HepG2 (cell line): ENCODE measurements at regions of chr2 and their contacts with region 1.

Region 1: GRCh38 chr2:17309741-17310339 is 208.4 kb downstream of the RAD51AP2 start:
- DNase-seq: peak; percentile 86
- ATAC-seq: peak; percentile 99
- H3K4me3 ChIP-seq: no peak overlapping the region
- H3K27ac ChIP-seq: no peak overlapping the region
- H3K4me1 ChIP-seq: peaks cover 20% of the 10 kb centered on the region
- H3K27me3 ChIP-seq: no peaks in the 10 kb centered on the region; a peak in 1 of 5 replicates
- CTCF ChIP-seq: peak; percentile 91
- EP300 ChIP-seq: no peak
- POLR2A ChIP-seq: no peak
- RAD21 ChIP-seq: peak; percentile 82

Region 2: DNA sequence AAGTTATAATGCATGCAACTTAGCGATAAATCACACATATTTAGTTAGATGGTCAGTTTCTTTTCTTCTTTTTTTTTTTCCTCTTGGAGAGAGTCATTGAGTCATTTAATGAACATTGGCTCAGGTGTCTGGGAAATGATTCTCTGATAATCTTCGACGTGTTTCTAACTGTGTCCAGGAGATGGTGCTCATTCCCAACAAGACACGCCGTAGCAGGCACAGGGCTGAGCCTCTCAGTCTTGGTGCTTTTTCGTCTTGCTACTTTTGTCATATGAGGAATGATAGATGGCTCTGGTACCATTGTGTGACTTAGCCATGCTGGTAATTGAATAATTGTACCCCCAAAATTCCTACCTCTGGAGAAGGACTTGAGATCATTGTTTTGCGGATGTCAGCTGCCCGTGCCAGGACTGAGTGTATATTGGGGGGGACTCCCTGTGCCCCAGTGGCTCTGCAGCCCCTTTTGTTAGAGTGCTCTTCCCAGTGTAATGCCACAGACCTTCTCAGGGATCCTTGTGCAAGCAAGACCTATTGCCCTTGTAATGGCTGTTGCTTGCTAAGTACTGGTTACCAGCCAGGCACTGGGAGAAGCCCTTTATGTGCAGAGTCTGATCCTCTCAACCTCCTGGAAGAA is 536.6 kb before region 1 on chr2:
- CTCF ChIA-PET with region 1: interaction called, 18 read pairs
- POLR2A ChIA-PET with region 1: no interaction called
- in situ Hi-C with region 1: loop called (anchors 5 kb)
- intact Hi-C with region 1: loop called (anchors 1 kb)
- DNase-seq: peak; percentile 43
- ATAC-seq: peak; percentile 81
- H3K4me3 ChIP-seq: no peak overlapping the region
- H3K27ac ChIP-seq: no peak overlapping the region
- H3K4me1 ChIP-seq: peaks cover 7% of the 10 kb centered on the region; the same call in 1 of the 2 replicates
- H3K27me3 ChIP-seq: no peaks in the 10 kb centered on the region
- CTCF ChIP-seq: peak; percentile 89
- EP300 ChIP-seq: no peak
- POLR2A ChIP-seq: no peak
- RAD21 ChIP-seq: peak; percentile 73

Region 3: GRCh38 chr2:16900405-16901025 is 409.3 kb before region 1 on chr2:
- CTCF ChIA-PET with region 1: no interaction called
- POLR2A ChIA-PET with region 1: no interaction called
- in situ Hi-C with region 1: no loop called
- intact Hi-C with region 1: loop called (anchors 5 kb)
- DNase-seq: peak; percentile 55
- ATAC-seq: peak; percentile 98
- H3K4me3 ChIP-seq: no peak overlapping the region
- H3K27ac ChIP-seq: no peak overlapping the region
- H3K4me1 ChIP-seq: no peaks in the 10 kb centered on the region
- H3K27me3 ChIP-seq: no peaks in the 10 kb centered on the region
- CTCF ChIP-seq: peak; percentile 82
- EP300 ChIP-seq: no peak
- POLR2A ChIP-seq: no peak
- RAD21 ChIP-seq: peak; percentile 73

Region 4: DNA sequence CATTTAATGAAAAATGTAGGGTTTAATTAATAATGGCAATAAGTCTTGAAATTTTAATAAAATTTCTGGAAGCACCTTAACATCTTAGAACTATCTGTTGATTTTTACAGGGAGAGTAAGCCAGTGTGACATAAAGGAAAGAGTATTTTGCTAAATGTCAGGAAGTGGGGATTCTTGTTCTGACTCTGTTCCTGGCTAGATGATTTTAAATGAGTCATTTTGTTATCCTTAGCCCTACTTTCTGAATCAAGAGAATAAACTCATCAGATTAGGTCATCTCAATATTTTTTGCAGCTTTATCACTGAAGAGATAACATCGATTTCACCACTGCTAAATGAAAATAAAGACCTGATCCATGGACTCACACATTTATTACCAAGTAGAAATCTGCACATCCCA is 266.7 kb before region 1 on chr2:
- CTCF ChIA-PET with region 1: no interaction called
- POLR2A ChIA-PET with region 1: no interaction called
- in situ Hi-C with region 1: no loop called
- intact Hi-C with region 1: no loop called
- DNase-seq: no peak
- ATAC-seq: no peak
- H3K4me3 ChIP-seq: no peak overlapping the region
- H3K27ac ChIP-seq: no peak overlapping the region
- H3K4me1 ChIP-seq: no peaks in the 10 kb centered on the region
- H3K27me3 ChIP-seq: no peaks in the 10 kb centered on the region
- CTCF ChIP-seq: no peak
- EP300 ChIP-seq: no peak
- POLR2A ChIP-seq: no peak
- RAD21 ChIP-seq: no peak

Region 5: GRCh38 chr2:17171446-17172049 is 138.3 kb before region 1 on chr2:
- CTCF ChIA-PET with region 1: no interaction called
- POLR2A ChIA-PET with region 1: no interaction called
- in situ Hi-C with region 1: no loop called
- intact Hi-C with region 1: loop called (anchors 5 kb)
- DNase-seq: peak; percentile 45
- ATAC-seq: peak; percentile 100
- H3K4me3 ChIP-seq: no peak overlapping the region
- H3K27ac ChIP-seq: no peak overlapping the region
- H3K4me1 ChIP-seq: no peaks in the 10 kb centered on the region
- H3K27me3 ChIP-seq: no peaks in the 10 kb centered on the region
- CTCF ChIP-seq: peak; percentile 64
- EP300 ChIP-seq: peak in 1 of 2 experiments; percentile 12; a peak in 1 of 4 replicates
- POLR2A ChIP-seq: no peak
- RAD21 ChIP-seq: no peak

Region 6: GRCh38 chr2:17270894-17271293 is 38.9 kb before region 1 on chr2:
- CTCF ChIA-PET with region 1: no interaction called
- POLR2A ChIA-PET with region 1: no interaction called
- in situ Hi-C with region 1: no loop called
- intact Hi-C with region 1: no loop called
- DNase-seq: no peak
- ATAC-seq: no peak
- H3K4me3 ChIP-seq: no peak overlapping the region
- H3K27ac ChIP-seq: no peak overlapping the region
- H3K4me1 ChIP-seq: no peaks in the 10 kb centered on the region
- H3K27me3 ChIP-seq: no peaks in the 10 kb centered on the region
- CTCF ChIP-seq: no peak
- EP300 ChIP-seq: no peak
- POLR2A ChIP-seq: no peak
- RAD21 ChIP-seq: no peak

Region 7: GRCh38 chr2:17573085-17573803 is 263.4 kb after region 1 on chr2:
- CTCF ChIA-PET with region 1: no interaction called
- POLR2A ChIA-PET with region 1: no interaction called
- in situ Hi-C with region 1: no loop called
- intact Hi-C with region 1: loop called (anchors 5 kb)
- DNase-seq: peak; percentile 52
- ATAC-seq: peak; percentile 87
- H3K4me3 ChIP-seq: no peak overlapping the region
- H3K27ac ChIP-seq: no peak overlapping the region
- H3K4me1 ChIP-seq: peaks cover 40% of the 10 kb centered on the region
- H3K27me3 ChIP-seq: no peaks in the 10 kb centered on the region
- CTCF ChIP-seq: peak; percentile 68
- EP300 ChIP-seq: no peak
- POLR2A ChIP-seq: no peak
- RAD21 ChIP-seq: peak; percentile 66; the same call in 1 of the 2 replicates

Region 8: GRCh38 chr2:17658251-17658843 is 348.5 kb after region 1 on chr2:
- CTCF ChIA-PET with region 1: no interaction called
- POLR2A ChIA-PET with region 1: no interaction called
- in situ Hi-C with region 1: loop called (anchors 25 kb)
- intact Hi-C with region 1: no loop called
- DNase-seq: no peak
- ATAC-seq: peak; percentile 11; the same call in 1 of the 3 replicates
- H3K4me3 ChIP-seq: no peak overlapping the region
- H3K27ac ChIP-seq: no peak overlapping the region
- H3K4me1 ChIP-seq: no peaks in the 10 kb centered on the region
- H3K27me3 ChIP-seq: no peaks in the 10 kb centered on the region
- CTCF ChIP-seq: no peak
- EP300 ChIP-seq: no peak
- POLR2A ChIP-seq: no peak
- RAD21 ChIP-seq: no peak

Region 9: DNA sequence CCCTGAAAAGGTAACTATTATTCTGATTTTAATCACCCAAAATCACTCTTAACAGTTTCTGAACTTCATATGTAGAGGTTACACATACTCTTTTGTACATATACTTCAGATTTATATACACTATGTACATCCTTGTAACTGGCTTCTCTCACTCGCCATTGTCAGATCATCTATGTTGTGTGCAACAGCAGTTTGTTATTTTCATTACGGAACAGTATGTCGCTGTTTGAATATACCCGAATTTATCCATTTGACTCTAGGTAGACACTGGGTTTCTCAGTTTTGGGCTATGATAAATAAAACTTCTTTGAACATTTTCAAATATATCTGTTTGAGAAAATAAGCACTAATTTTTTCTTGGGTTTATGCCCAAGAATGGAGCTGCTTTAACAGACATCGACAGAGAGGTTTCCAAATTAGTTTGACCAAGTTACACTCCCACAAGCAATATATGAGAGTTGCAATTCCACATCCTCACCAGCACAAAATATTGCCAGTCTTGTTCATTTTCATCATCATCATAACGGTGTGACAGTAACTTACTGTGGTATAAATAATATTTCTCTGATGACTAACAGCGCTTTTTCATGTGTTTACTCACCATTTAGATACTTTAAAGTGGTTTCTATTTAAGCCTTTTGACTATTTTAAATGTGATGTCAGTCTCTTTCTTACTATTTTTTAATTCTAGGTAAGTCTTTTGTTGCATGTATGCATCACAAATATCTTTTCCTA is 362.9 kb after region 1 on chr2:
- CTCF ChIA-PET with region 1: no interaction called
- POLR2A ChIA-PET with region 1: no interaction called
- in situ Hi-C with region 1: loop called (anchors 25 kb)
- intact Hi-C with region 1: loop called (anchors 5 kb)
- DNase-seq: no peak
- ATAC-seq: no peak; the same call in 2 of the 3 replicates
- H3K4me3 ChIP-seq: no peak overlapping the region
- H3K27ac ChIP-seq: no peak overlapping the region
- H3K4me1 ChIP-seq: no peaks in the 10 kb centered on the region
- H3K27me3 ChIP-seq: no peaks in the 10 kb centered on the region
- CTCF ChIP-seq: no peak
- EP300 ChIP-seq: no peak
- POLR2A ChIP-seq: no peak
- RAD21 ChIP-seq: no peak